ENCODE measurements at regions of chr11 and their contacts with region 1.

Region 1: GRCh38 chr11:22640862-22641261 is 15.2 kb upstream of the FANCF start:
- DNase-seq: no peak
- H3K4me3 Mint-ChIP-seq: no peak overlapping the region
- H3K27ac Mint-ChIP-seq: no peak overlapping the region
- H3K4me1 Mint-ChIP-seq: no peaks in the 10 kb centered on the region
- H3K27me3 Mint-ChIP-seq: no peaks in the 10 kb centered on the region

Region 2: GRCh38 chr11:22602504-22602903 is 38.4 kb before region 1 on chr11:
- intact Hi-C with region 1: loop called (anchors 2 kb)
- DNase-seq: no peak
- H3K4me3 Mint-ChIP-seq: no peak overlapping the region
- H3K27ac Mint-ChIP-seq: no peak overlapping the region
- H3K4me1 Mint-ChIP-seq: no peaks in the 10 kb centered on the region
- H3K27me3 Mint-ChIP-seq: peaks cover 2% of the 10 kb centered on the region

Measured in activated CD4-positive, alpha-beta T cell treated with anti-CD3 and anti-CD28 coated beads, Interleukin-2, amount 10 ng/mL, durations not matched to agents 24 days and 14 days (primary cell).